K562 (cell line): ENCODE measurements at regions of chr11 and their contacts with region 1.

Region 1: DNA sequence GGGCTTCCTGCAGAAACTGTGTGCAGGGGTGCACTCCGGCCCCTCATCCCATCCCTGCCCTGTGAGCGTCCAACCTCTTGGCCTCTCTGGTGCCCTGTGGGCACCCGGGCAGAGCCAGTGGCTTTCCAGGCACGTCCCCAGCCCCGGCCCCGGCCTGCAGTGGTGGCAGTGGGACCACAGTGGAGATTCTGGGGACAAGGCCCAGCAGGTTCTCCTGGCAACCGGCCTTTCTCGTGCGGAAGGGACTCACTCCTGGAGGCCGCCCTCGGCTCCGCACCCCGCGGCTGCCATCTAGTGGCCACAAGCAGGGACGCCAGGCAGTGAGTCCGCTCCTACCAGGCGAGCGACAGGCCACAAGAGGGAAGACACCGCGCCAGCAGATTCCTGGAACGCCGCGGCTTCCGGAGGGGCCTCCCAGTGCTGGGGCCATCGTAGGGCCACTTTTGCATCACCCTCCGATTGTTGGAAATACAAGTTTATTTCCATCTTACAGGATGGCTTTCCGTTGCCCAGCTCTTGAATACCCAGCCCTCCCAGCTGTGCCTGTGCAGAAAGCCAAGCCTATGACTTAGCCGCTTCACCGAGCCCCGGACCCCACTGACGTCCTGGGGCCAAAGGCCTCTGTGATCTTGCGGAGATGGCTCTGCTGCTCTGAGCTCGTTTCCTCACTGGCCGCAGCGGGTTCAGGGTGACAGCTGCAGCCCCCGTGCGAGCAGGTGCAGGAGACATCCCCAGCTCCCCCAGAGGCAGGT is 357.3 kb downstream of the CTTN start:
- DNase-seq: peak; percentile 74 to 90 (median 88)
- ATAC-seq: peak; percentile 100
- H3K4me3 ChIP-seq: no peak overlapping the region
- H3K27ac ChIP-seq: no peak overlapping the region
- H3K4me1 ChIP-seq: peaks cover 0 to 9% of the 10 kb centered on the region in 2 experiments; a peak in 1 of 5 replicates
- H3K27me3 ChIP-seq: peaks cover 0 to 26% of the 10 kb centered on the region in 2 experiments; a peak in 4 of 5 replicates
- CTCF ChIP-seq: peak; percentile 85 to 98 (median 91)
- EP300 ChIP-seq: no peak
- POLR2A ChIP-seq: no peak
- RAD21 ChIP-seq: peak; percentile 68 to 84

Region 2: DNA sequence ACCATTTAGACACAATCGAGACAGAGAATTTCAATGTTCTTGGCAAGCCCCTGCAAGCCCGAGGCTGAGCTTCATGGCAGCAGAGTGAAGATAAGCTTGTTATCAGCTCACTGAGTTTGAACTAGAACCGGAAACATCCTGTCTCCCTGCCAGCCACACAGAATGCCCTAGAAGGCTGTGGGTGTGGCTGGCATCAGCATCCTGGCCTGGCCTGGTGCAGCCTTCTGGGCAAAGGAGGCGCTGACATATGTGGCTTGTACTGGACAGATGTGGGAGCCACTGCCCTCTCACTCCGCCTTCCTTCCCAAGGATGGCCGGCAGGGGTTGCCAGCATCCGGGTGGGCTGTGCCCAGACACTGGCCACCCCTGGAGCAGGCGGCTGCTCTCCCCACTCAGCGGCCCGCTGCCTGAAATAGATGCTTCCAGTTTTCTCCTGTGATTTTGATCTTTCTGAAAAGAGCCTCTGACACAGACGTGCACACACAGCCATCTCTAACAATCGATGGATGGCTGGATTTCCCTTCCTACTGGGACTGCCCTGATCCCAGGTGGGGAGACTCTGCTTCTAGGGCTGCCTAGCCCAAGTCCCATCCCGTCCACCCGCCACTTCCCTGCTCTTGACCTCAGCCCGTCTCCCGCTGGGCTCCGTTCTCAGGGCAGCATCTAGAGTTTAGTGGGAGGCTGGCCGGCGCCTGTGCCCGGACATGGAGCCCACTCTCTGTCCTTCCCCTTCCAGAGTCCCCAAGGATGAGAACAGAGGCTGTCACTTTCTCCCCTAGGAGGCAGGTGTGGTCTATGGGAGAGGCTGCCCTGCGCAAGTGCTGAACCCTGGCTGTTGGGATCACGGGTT is 207.5 kb before region 1 on chr11:
- CTCF ChIA-PET with region 1: no interaction called
- POLR2A ChIA-PET with region 1: no interaction called
- in situ Hi-C with region 1: no loop called
- intact Hi-C with region 1: loop called (anchors 2 kb)
- DNase-seq: no peak
- ATAC-seq: no peak
- H3K4me3 ChIP-seq: no peak overlapping the region
- H3K27ac ChIP-seq: no peak overlapping the region
- H3K4me1 ChIP-seq: peaks cover 0 to 14% of the 10 kb centered on the region in 2 experiments; a peak in 2 of 5 replicates
- H3K27me3 ChIP-seq: peaks cover 33 to 90% of the 10 kb centered on the region in 2 experiments
- CTCF ChIP-seq: no peak
- EP300 ChIP-seq: no peak
- POLR2A ChIP-seq: no peak
- RAD21 ChIP-seq: no peak

Region 3: GRCh38 chr11:70577948-70578347 is 177.6 kb before region 1 on chr11:
- CTCF ChIA-PET with region 1: no interaction called
- POLR2A ChIA-PET with region 1: no interaction called
- in situ Hi-C with region 1: no loop called
- intact Hi-C with region 1: no loop called
- DNase-seq: no peak
- ATAC-seq: no peak
- H3K4me3 ChIP-seq: no peak overlapping the region
- H3K27ac ChIP-seq: no peak overlapping the region
- H3K4me1 ChIP-seq: no peaks in the 10 kb centered on the region; a peak in 1 of 5 replicates
- H3K27me3 ChIP-seq: peaks cover 0 to 60% of the 10 kb centered on the region in 2 experiments; a peak in 3 of 5 replicates
- CTCF ChIP-seq: no peak
- EP300 ChIP-seq: no peak
- POLR2A ChIP-seq: no peak
- RAD21 ChIP-seq: no peak

Region 4: DNA sequence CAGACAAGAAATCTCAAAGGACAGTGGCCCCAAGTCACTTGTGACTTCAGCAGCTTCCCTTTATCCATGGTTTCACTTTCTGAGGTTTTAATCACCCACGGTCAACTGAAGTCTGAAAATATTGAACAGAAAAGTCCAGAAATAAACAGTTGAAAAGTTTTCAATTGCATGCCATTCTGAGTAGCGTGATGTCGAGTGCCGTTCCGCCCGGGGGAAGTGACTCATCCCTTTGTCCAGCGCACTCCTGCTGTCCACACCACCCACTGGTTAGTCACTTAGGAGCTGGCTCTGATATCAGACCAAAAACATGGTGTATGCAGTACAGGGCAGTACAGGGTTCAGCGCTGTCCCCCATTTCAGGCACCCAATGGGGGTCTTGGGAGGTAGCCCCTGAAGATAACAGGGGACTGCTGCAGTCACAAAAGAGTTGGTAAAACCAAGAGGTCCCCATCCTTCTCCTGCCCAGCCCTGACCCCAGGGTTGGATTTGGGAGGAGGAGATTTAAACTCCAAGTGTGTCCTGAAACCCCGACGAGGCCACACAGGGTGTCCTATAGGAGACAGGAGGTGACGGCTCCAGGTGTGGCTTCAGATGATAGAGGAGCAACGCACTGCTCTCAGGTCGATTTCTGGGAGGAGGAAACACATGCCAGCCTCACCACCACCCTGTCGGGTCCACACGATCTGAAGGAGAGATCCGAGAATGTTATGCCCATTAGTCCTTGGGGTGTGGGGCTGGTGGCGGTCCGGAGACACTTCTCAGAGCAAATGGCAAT is 32.8 kb after region 1 on chr11:
- CTCF ChIA-PET with region 1: no interaction called
- POLR2A ChIA-PET with region 1: no interaction called
- in situ Hi-C with region 1: no loop called
- intact Hi-C with region 1: no loop called
- DNase-seq: peak in 3 of 4 experiments; percentile 19 to 44 (median 34)
- ATAC-seq: peak; percentile 57; the same call in 2 of the 3 replicates
- H3K4me3 ChIP-seq: no peak overlapping the region
- H3K27ac ChIP-seq: peak overlapping the region; percentile 25; the same call in 2 of the 3 replicates
- H3K4me1 ChIP-seq: no peaks in the 10 kb centered on the region; a peak in 2 of 5 replicates
- H3K27me3 ChIP-seq: peaks cover 0 to 5% of the 10 kb centered on the region in 2 experiments; a peak in 2 of 5 replicates
- CTCF ChIP-seq: no peak
- EP300 ChIP-seq: no peak
- POLR2A ChIP-seq: no peak
- RAD21 ChIP-seq: no peak